ENCODE measurements at regions of chr2 and their contacts with region 1.

Region 1: GRCh38 chr2:98835831-98836385 is 100.1 kb downstream of the CRACDL start:
- DNase-seq: peak; percentile 36 to 88 (median 51)
- ATAC-seq: peak; percentile 85
- H3K4me3 ChIP-seq: no peak overlapping the region
- H3K4me3 Mint-ChIP-seq: peak overlapping the region; percentile 57
- H3K27ac ChIP-seq: peak overlapping the region; percentile 27 to 48
- H3K27ac Mint-ChIP-seq: peak overlapping the region; percentile 94
- H3K4me1 ChIP-seq: peaks cover 42% of the 10 kb centered on the region
- H3K4me1 Mint-ChIP-seq: peaks cover 46% of the 10 kb centered on the region
- H3K27me3 ChIP-seq: no peaks in the 10 kb centered on the region
- H3K27me3 Mint-ChIP-seq: no peaks in the 10 kb centered on the region
- CTCF ChIP-seq: no peak

Region 2: GRCh38 chr2:98568881-98569793 is 266.8 kb before region 1 on chr2:
- CTCF ChIA-PET with region 1: interaction called, 8 read pairs
- POLR2A ChIA-PET with region 1: no interaction called
- intact Hi-C with region 1: loop called (anchors 1 kb)
- DNase-seq: peak; percentile 55 to 83 (median 68)
- ATAC-seq: peak; percentile 92
- H3K4me3 ChIP-seq: no peak overlapping the region
- H3K4me3 Mint-ChIP-seq: no peak overlapping the region
- H3K27ac ChIP-seq: no peak overlapping the region
- H3K27ac Mint-ChIP-seq: peak overlapping the region; percentile 36
- H3K4me1 ChIP-seq: no peaks in the 10 kb centered on the region
- H3K4me1 Mint-ChIP-seq: no peaks in the 10 kb centered on the region
- H3K27me3 ChIP-seq: no peaks in the 10 kb centered on the region
- H3K27me3 Mint-ChIP-seq: no peaks in the 10 kb centered on the region
- CTCF ChIP-seq: peak; percentile 93

Region 3: GRCh38 chr2:98634401-98635092 is 201.4 kb before region 1 on chr2:
- CTCF ChIA-PET with region 1: interaction called, 15 read pairs
- POLR2A ChIA-PET with region 1: no interaction called
- intact Hi-C with region 1: loop called in 1 of 2 experiments (anchors 1 kb)
- DNase-seq: peak in 10 of 14 experiments; percentile 28 to 76 (median 48)
- ATAC-seq: peak; percentile 60
- H3K4me3 ChIP-seq: no peak overlapping the region
- H3K4me3 Mint-ChIP-seq: no peak overlapping the region
- H3K27ac ChIP-seq: peak overlapping the region; percentile 9 to 25
- H3K27ac Mint-ChIP-seq: peak overlapping the region; percentile 83
- H3K4me1 ChIP-seq: peaks cover 31% of the 10 kb centered on the region
- H3K4me1 Mint-ChIP-seq: peaks cover 40% of the 10 kb centered on the region
- H3K27me3 ChIP-seq: no peaks in the 10 kb centered on the region
- H3K27me3 Mint-ChIP-seq: no peaks in the 10 kb centered on the region
- CTCF ChIP-seq: no peak

Region 4: GRCh38 chr2:98720286-98720685 is 115.6 kb before region 1 on chr2:
- CTCF ChIA-PET with region 1: no interaction called
- POLR2A ChIA-PET with region 1: no interaction called
- intact Hi-C with region 1: no loop called
- DNase-seq: no peak
- ATAC-seq: no peak
- H3K4me3 ChIP-seq: no peak overlapping the region
- H3K4me3 Mint-ChIP-seq: no peak overlapping the region
- H3K27ac ChIP-seq: no peak overlapping the region
- H3K27ac Mint-ChIP-seq: peak overlapping the region; percentile 87
- H3K4me1 ChIP-seq: peaks cover 52% of the 10 kb centered on the region
- H3K4me1 Mint-ChIP-seq: peaks cover 90% of the 10 kb centered on the region
- H3K27me3 ChIP-seq: no peaks in the 10 kb centered on the region
- H3K27me3 Mint-ChIP-seq: no peaks in the 10 kb centered on the region
- CTCF ChIP-seq: no peak

Region 5: GRCh38 chr2:98909317-98910211 is 73.7 kb after region 1 on chr2:
- CTCF ChIA-PET with region 1: no interaction called
- POLR2A ChIA-PET with region 1: no interaction called
- intact Hi-C with region 1: no loop called
- DNase-seq: no peak
- ATAC-seq: no peak
- H3K4me3 ChIP-seq: no peak overlapping the region
- H3K4me3 Mint-ChIP-seq: peak overlapping the region; percentile 20
- H3K27ac ChIP-seq: no peak overlapping the region
- H3K27ac Mint-ChIP-seq: no peak overlapping the region
- H3K4me1 ChIP-seq: peaks cover 9% of the 10 kb centered on the region
- H3K4me1 Mint-ChIP-seq: peaks cover 15% of the 10 kb centered on the region
- H3K27me3 ChIP-seq: peaks cover 4% of the 10 kb centered on the region in 2 experiments
- H3K27me3 Mint-ChIP-seq: peaks cover 14% of the 10 kb centered on the region
- CTCF ChIP-seq: no peak

Region 6: DNA sequence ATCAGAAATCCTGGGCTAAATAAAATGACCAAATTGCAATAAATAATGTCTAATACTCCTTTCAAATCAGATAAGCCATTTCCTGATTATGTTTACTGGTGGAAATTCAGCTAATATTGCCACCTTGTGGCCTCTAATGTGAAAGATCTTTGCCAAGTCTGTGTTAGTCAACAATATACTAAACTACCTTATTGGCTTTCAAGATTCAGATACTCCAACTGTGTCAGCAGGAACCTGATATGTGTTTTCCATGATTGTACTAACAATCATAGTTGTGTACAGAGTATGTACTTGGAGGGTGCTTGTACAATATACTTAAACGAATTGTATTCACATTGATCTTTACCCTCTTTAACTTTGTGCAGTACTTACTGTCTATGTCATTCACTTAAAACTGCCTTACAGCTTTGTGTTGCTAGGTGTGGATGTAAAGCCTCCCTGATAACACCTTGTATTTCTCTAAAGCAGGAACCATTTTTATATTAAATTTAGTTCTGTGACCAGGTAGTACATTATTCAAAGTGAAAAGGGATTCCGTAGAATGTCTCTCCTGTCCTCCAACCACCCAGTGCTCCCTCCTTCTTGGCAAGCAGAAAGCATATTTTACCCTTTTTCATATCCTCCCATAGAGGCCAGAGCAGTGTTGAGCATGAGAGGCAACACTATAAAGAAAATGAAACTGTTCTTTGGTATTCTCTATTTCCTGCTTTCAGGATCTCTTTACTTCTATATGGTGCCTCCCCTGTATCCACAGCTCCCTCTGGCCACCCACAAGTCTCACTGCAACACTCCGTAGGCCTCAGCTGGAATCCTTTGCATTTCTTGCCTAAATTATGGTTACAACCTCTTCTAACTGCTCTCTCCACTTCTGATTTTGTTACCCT is 230.4 kb after region 1 on chr2:
- CTCF ChIA-PET with region 1: interaction called, 5 read pairs
- POLR2A ChIA-PET with region 1: no interaction called
- intact Hi-C with region 1: loop called in 1 of 2 experiments (anchors 2 kb)
- DNase-seq: peak in 7 of 14 experiments; percentile 3 to 76 (median 52)
- ATAC-seq: peak; percentile 89
- H3K4me3 ChIP-seq: no peak overlapping the region
- H3K4me3 Mint-ChIP-seq: no peak overlapping the region
- H3K27ac ChIP-seq: peak overlapping the region; percentile 43 to 72
- H3K27ac Mint-ChIP-seq: no peak overlapping the region
- H3K4me1 ChIP-seq: peaks cover 3% of the 10 kb centered on the region
- H3K4me1 Mint-ChIP-seq: peaks cover 5% of the 10 kb centered on the region
- H3K27me3 ChIP-seq: no peaks in the 10 kb centered on the region
- H3K27me3 Mint-ChIP-seq: no peaks in the 10 kb centered on the region
- CTCF ChIP-seq: peak; percentile 7

Measured in CD4-positive, alpha-beta T cell (primary cell).